A549 (cell line): ENCODE measurements at regions of chr12 and their contacts with region 1.

Region 1: DNA sequence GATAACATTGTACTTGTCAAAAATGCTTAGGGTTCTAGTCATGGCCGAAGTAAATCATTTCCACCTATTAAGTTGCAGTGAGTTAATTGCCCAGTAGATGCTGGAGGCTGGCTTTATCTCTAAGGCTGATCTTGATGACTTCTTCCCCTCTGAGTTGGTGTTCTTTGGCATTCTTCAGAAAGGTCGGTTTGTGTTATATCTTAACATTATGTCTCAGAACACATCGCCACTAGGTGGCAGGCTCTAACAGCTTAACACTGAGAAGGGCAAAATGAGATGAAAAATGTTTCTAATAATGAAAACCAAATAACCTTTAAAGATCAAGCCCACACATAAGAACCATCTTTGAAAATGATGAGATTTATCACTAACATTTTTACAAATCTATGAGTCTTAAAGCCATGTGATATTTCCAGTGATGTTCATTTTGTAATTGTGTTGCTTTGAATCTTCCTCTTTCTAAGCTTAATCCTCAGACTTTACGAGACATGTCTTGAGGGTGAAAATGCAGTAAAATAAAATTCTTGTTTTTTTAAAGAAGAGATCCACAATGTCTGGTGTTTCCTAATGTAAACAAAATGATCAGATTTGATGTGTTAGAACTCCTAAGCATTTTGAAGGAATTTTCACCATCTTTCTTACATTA is 28.6 kb downstream of the SUDS3 start:
- DNase-seq: peak; percentile 41 to 69
- ATAC-seq: peak; percentile 88 to 92
- H3K4me3 ChIP-seq: no peak overlapping the region
- H3K27ac ChIP-seq: no peak overlapping the region
- H3K4me1 ChIP-seq: no peaks in the 10 kb centered on the region
- CTCF ChIP-seq: peak; percentile 92
- EP300 ChIP-seq: no peak
- POLR2A ChIP-seq: no peak
- RAD21 ChIP-seq: peak; percentile 81 to 84

Region 2: GRCh38 chr12:117685110-117685926 is 719.7 kb before region 1 on chr12:
- CTCF ChIA-PET with region 1: no interaction called
- POLR2A ChIA-PET with region 1: no interaction called
- DNase-seq: peak; percentile 95 to 96
- ATAC-seq: peak; percentile 88 to 91
- H3K4me3 ChIP-seq: no peak overlapping the region
- H3K27ac ChIP-seq: peak overlapping the region; percentile 94 to 96
- H3K4me1 ChIP-seq: peaks cover 69% of the 10 kb centered on the region
- CTCF ChIP-seq: no peak
- EP300 ChIP-seq: peak; percentile 72 to 85; a peak in 4 of 5 replicates
- POLR2A ChIP-seq: peak; percentile 16; the same call in 1 of the 2 replicates
- RAD21 ChIP-seq: peak; percentile 12 to 29; a peak in 3 of 5 replicates

Region 3: DNA sequence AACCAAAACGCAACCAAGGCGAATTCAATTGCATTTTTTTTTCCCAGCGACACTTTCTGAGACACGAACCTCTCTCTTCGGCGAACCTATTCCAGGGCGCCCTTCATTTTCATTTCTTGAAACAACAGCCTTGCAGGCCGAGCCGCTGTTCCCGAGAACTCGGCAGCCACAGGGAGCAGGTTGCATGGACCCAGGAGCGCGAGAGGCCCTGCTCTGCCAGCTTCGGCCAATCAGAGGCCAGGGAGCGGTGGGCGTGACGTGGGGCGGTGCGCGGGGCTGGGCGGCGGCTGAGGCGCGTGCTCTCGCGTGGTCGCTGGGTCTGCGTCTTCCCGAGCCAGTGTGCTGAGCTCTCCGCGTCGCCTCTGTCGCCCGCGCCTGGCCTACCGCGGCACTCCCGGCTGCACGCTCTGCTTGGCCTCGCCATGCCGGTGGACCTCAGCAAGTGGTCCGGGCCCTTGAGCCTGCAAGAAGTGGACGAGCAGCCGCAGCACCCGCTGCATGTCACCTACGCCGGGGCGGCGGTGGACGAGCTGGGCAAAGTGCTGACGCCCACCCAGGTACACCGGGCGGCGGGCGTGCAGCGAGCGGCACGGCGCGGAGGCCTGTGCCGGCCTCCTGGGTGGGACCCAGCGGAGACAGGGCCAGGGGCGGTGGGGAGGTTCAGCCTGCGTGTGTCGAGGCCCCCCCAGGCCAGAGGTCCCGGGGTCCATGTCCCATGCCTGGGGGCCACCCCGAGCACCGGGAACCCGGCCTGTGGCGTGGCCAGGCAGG is 269.0 kb before region 1 on chr12 and contains the start of gene PEBP1:
- CTCF ChIA-PET with region 1: no interaction called
- POLR2A ChIA-PET with region 1: no interaction called
- DNase-seq: peak; percentile 96
- ATAC-seq: peak; percentile 99
- H3K4me3 ChIP-seq: peak within 1 kb of the TSS; percentile 95
- H3K27ac ChIP-seq: peak within 1 kb of the TSS; percentile 90 to 96
- H3K4me1 ChIP-seq: peaks cover 25% of the 10 kb centered on the region
- CTCF ChIP-seq: no peak
- EP300 ChIP-seq: no peak
- POLR2A ChIP-seq: peak; percentile 87
- RAD21 ChIP-seq: no peak
- polyA plus RNA-seq, gene PEBP1: 152 and 169 TPM in 2 replicates

Region 4: DNA sequence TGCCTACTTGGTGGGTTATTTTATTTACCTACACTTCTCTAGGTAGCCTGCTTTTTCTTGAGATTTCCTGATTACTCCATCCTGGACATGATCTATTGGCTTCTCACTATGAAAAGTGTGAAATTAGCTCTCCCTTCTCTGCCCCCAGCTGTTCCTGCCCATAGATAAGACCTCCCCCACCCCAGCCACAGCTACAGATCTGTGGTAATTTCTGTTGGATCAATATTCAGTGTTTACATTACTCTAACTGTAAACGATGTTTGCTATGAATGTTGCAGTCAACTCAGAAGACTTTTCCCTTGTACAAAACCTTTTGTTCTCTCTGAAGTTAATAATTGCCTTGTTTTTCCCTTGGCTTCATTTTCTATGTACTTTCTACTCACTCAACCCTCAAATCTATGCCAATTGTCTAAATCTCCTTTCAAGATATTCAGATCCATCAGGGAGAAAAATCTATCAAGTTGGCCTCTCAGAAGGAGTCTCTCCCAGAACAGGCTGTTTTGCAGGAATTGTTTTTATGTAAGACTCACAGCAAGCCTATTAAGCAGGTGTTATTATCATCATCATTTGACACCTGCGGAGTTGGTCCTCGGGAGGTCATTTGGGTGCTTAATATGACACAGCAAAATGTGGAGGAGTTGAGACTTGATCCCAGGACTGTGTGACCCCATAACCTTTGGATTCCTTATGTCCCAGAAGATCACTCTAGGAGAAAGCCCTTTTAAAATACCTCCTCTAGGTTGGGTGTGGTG is 198.8 kb after region 1 on chr12:
- CTCF ChIA-PET with region 1: no interaction called
- POLR2A ChIA-PET with region 1: no interaction called
- DNase-seq: no peak
- ATAC-seq: no peak
- H3K4me3 ChIP-seq: no peak overlapping the region
- H3K27ac ChIP-seq: no peak overlapping the region
- H3K4me1 ChIP-seq: no peaks in the 10 kb centered on the region
- CTCF ChIP-seq: no peak
- EP300 ChIP-seq: no peak
- POLR2A ChIP-seq: no peak
- RAD21 ChIP-seq: no peak

Region 5: DNA sequence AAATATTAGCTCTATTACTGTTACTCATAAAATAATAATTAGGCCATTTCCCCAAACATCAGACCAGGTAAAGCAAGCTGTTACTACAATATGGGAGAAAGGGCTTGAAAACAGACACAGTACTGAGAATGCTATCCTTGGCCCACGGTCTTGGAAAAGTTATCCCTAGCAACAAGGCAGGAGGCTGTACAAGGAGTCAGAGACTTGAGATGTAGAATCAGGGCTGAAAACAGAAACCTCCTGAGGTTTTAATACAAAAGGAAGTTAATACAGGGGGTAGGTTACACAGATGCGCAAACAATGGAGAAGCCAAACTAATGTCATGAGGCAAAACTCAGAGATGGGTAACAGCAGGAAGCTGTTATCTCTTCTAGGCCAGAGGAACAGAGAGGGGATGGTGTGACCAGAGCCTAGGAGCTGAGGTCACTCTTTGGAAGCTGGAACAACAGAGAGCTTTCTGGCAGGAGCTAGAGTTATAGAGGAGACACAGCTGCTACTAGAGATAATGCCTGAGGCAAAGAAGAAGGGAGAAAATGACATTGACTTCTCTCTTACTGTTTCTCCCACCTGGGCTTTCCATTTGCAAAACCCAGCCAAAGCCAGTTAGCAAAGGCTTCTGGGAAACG is 220.2 kb after region 1 on chr12:
- CTCF ChIA-PET with region 1: interaction called, 14 read pairs
- POLR2A ChIA-PET with region 1: no interaction called
- DNase-seq: no peak
- ATAC-seq: no peak
- H3K4me3 ChIP-seq: no peak overlapping the region
- H3K27ac ChIP-seq: no peak overlapping the region
- H3K4me1 ChIP-seq: no peaks in the 10 kb centered on the region
- CTCF ChIP-seq: no peak
- EP300 ChIP-seq: no peak
- POLR2A ChIP-seq: no peak
- RAD21 ChIP-seq: no peak